Naive thymus-derived CD4-positive, alpha-beta T cell (primary cell): ENCODE measurements at regions of chr3 and their contacts with region 1.

Region 1: DNA sequence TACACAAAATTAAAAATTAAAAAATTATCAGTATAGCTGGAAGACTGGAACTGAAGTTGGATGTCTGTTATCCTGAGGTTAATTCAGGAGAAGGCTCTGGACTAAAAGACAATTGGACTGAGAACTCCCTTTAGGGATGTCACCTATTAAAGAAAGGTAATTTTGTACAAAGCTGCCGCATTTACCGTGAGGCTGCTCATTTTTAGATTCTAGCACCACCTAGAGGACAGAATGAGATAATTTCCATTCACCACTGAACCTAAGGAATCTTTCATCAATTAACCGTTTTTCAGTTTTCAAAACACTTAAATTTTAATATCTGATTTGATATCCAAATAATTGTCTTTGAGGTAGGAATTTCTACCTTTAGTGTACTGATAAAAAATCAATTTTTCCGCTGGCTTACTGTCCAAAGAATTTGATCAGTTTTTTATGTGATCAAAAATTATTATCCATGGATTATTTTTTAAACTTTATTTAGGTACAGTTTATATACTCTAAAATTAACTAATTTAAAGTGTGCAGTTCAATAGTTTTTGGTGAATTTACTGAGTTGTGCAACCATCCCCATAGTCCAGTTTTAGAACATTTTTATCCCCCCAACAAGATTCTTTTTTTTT is 106.7 kb upstream of the TNIK start:
- DNase-seq: peak in 7 of 9 donors; percentile 22 to 67 (median 54)
- ATAC-seq: peak; percentile 72
- H3K4me3 ChIP-seq: no peak overlapping the region
- H3K4me3 Mint-ChIP-seq: no peak overlapping the region
- H3K27ac ChIP-seq: no peak overlapping the region
- H3K27ac Mint-ChIP-seq: peak overlapping the region in 1 of 9 donors; percentile 44
- H3K4me1 ChIP-seq: peaks cover 0 to 4% of the 10 kb centered on the region in 2 donors
- H3K4me1 Mint-ChIP-seq: peaks cover 3 to 38% (median 6%) of the 10 kb centered on the region in 7 donors
- H3K27me3 ChIP-seq: no peaks in the 10 kb centered on the region
- H3K27me3 Mint-ChIP-seq: peaks cover 0 to 32% (median 0%) of the 10 kb centered on the region in 5 donors

Region 2: DNA sequence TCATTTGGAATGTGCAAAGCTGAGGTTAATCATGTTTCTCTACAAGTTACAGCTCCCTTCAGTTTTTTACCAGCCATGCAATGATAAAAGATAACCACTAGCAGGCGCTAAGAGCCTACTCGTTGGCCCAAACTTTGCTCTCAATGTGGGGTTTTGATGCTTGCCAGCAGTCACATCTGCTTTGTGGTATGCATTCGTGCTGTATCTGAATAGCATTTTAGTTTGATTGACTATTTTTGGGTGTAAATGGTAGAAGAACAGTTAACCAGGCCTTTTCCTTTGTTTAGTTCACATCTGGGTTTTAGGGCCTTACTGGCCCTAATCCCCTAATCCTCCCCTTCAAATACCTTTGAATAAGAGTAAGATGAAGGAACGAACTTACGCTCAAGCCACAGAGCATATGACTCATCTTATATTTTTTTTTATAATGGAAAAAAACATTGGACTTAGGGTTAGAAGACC is 1152.7 kb before region 1 on chr3:
- CTCF ChIA-PET with region 1: no interaction called
- POLR2A ChIA-PET with region 1: no interaction called
- intact Hi-C with region 1: loop called in 1 of 2 experiments (anchors 10 kb)
- DNase-seq: peak in 6 of 9 donors; percentile 25 to 58 (median 48)
- ATAC-seq: peak; percentile 75
- H3K4me3 ChIP-seq: no peak overlapping the region
- H3K4me3 Mint-ChIP-seq: no peak overlapping the region
- H3K27ac ChIP-seq: no peak overlapping the region
- H3K27ac Mint-ChIP-seq: no peak overlapping the region
- H3K4me1 ChIP-seq: peaks cover 4 to 7% of the 10 kb centered on the region in 2 donors
- H3K4me1 Mint-ChIP-seq: peaks cover 5 to 15% (median 7%) of the 10 kb centered on the region in 7 donors
- H3K27me3 ChIP-seq: peaks cover 0 to 8% of the 10 kb centered on the region in 2 donors
- H3K27me3 Mint-ChIP-seq: peaks cover 14 to 40% (median 17%) of the 10 kb centered on the region in 5 donors

Region 3: GRCh38 chr3:171049861-171050444 is 517.0 kb before region 1 on chr3:
- CTCF ChIA-PET with region 1: interaction called, 4 read pairs
- POLR2A ChIA-PET with region 1: no interaction called
- intact Hi-C with region 1: loop called (anchors 1 kb)
- DNase-seq: peak in 6 of 9 donors; percentile 8 to 36 (median 14)
- ATAC-seq: peak; percentile 67
- H3K4me3 ChIP-seq: no peak overlapping the region
- H3K4me3 Mint-ChIP-seq: no peak overlapping the region
- H3K27ac ChIP-seq: no peak overlapping the region
- H3K27ac Mint-ChIP-seq: no peak overlapping the region
- H3K4me1 ChIP-seq: no peaks in the 10 kb centered on the region
- H3K4me1 Mint-ChIP-seq: no peaks in the 10 kb centered on the region
- H3K27me3 ChIP-seq: no peaks in the 10 kb centered on the region
- H3K27me3 Mint-ChIP-seq: peaks cover 9 to 27% (median 13%) of the 10 kb centered on the region in 5 donors

Region 4: DNA sequence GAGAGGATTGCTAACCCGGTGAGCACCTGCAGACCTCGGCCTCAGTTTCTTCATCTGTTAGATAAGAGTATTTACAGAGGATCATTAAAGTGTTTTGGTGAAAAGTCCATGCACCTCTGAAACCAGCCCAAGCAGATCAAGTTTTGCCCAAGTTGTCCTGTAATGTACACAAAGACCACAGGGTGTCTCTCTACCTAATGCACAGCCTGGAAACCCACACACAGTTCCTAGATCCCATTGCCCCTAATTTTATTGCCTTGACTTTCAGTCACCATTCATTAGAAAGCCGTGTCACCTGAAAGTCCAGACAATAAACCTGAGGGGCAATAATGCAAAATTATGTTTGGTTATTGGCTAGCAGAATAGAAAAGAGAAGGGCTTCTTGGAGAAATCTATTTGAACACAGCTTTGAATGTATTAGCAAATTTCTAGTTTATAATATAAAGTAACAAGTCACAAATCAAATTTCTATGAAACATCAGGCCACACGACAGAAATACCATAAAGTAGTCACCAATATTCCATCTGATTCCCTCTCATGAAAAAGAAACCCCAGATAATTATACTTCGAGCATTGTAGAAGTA is 379.1 kb before region 1 on chr3:
- CTCF ChIA-PET with region 1: interaction called, 25 read pairs
- POLR2A ChIA-PET with region 1: no interaction called
- intact Hi-C with region 1: loop called (anchors 1 kb)
- DNase-seq: peak in 5 of 9 donors; percentile 6 to 43 (median 31)
- ATAC-seq: peak; percentile 68
- H3K4me3 ChIP-seq: no peak overlapping the region
- H3K4me3 Mint-ChIP-seq: no peak overlapping the region
- H3K27ac ChIP-seq: no peak overlapping the region
- H3K27ac Mint-ChIP-seq: no peak overlapping the region
- H3K4me1 ChIP-seq: no peaks in the 10 kb centered on the region
- H3K4me1 Mint-ChIP-seq: peaks cover 9 to 50% (median 19%) of the 10 kb centered on the region in 7 donors
- H3K27me3 ChIP-seq: no peaks in the 10 kb centered on the region
- H3K27me3 Mint-ChIP-seq: no peaks in the 10 kb centered on the region

Region 5: GRCh38 chr3:171514466-171514865 is 52.4 kb before region 1 on chr3:
- CTCF ChIA-PET with region 1: no interaction called
- POLR2A ChIA-PET with region 1: no interaction called
- intact Hi-C with region 1: loop called in 1 of 2 experiments (anchors 2 kb)
- DNase-seq: no peak
- ATAC-seq: no peak
- H3K4me3 ChIP-seq: no peak overlapping the region
- H3K4me3 Mint-ChIP-seq: no peak overlapping the region
- H3K27ac ChIP-seq: no peak overlapping the region
- H3K27ac Mint-ChIP-seq: no peak overlapping the region
- H3K4me1 ChIP-seq: no peaks in the 10 kb centered on the region
- H3K4me1 Mint-ChIP-seq: peaks cover 0 to 7% (median 0%) of the 10 kb centered on the region in 7 donors
- H3K27me3 ChIP-seq: no peaks in the 10 kb centered on the region
- H3K27me3 Mint-ChIP-seq: peaks cover 0 to 28% (median 0%) of the 10 kb centered on the region in 5 donors